K562 (cell line): ENCODE measurements at regions of chr6 and their contacts with region 1.

Region 1: DNA sequence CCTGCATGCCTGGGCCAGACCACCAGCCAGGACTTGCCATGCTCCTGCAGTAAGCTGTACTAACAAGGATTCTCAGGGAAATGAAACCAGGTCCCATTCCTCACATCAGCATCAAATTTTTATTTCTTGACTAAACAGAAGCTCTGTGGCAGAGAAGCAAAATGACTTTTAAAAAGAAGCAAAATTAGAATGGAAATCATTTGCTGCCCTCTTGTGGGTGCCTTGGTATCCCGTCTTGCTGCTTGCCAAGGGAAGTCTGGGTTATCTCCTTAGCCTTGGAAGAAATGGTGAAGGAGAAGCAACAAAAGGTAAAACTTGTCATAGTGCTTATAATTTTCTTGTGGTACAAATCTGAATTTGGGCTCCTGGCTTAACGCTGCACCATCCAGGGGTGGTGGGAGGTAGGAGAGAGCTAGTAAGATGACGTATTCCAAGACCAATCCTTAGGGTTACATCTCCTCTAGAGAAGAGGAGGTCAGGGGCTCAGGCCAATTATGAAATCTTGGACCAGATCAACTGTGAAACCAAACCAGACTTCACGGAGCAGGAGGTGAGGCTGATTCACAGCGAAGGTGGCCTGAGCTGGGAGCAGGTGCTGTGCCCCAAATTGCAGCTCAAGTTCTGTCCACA is 107.5 kb downstream of the FAXC start:
- DNase-seq: peak; percentile 13 to 41 (median 15)
- ATAC-seq: peak; percentile 59; the same call in 2 of the 3 replicates
- H3K4me3 ChIP-seq: no peak overlapping the region
- H3K27ac ChIP-seq: no peak overlapping the region
- H3K4me1 ChIP-seq: no peaks in the 10 kb centered on the region
- H3K27me3 ChIP-seq: no peaks in the 10 kb centered on the region
- CTCF ChIP-seq: peak; percentile 37 to 56 (median 43); a peak in 3 of 6 replicates
- EP300 ChIP-seq: no peak
- POLR2A ChIP-seq: no peak
- RAD21 ChIP-seq: peak in 1 of 2 experiments; percentile 52; a peak in 3 of 4 replicates

Region 2: DNA sequence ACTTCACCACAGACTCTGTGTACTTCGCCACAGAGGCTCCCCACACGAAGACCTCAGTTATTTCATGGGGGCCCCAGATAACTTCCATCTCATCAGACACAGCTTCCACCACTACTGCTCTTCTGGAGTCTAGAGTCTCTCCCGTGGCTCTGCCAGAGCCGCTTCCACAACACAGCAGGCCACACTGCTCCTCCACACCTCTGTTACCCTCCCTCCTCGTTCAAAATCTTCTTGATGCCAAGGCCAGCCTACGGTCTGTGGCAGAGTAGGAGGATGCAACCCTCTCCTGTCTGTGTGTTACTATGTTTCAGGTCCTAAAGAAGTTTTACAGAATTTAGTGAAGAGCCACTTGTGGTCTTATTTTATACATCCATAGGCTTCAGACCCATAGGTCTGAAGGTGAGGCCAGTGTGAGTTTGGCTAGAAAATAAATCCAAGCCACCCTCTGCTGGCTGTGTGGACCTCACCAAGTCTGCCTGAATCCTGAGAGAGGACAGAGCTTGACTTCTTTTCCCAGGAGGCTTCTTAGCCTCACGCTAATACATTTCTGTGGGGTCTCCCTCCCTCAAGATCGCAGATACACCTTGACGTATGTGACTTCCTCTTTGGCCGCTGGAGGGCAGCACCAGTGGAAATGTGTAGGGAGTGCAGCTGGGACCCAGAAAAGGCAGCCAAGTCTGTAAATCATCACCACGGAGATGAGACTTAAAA is 90.2 kb before region 1 on chr6:
- CTCF ChIA-PET with region 1: interaction called, 5 read pairs
- POLR2A ChIA-PET with region 1: no interaction called
- in situ Hi-C with region 1: no loop called
- intact Hi-C with region 1: loop called (anchors 5 kb)
- DNase-seq: peak; percentile 35 to 63 (median 50)
- ATAC-seq: peak; percentile 99
- H3K4me3 ChIP-seq: no peak overlapping the region
- H3K27ac ChIP-seq: no peak overlapping the region
- H3K4me1 ChIP-seq: no peaks in the 10 kb centered on the region
- H3K27me3 ChIP-seq: no peaks in the 10 kb centered on the region
- CTCF ChIP-seq: peak; percentile 45 to 80 (median 70)
- EP300 ChIP-seq: no peak
- POLR2A ChIP-seq: no peak
- RAD21 ChIP-seq: peak; percentile 35 to 51; a peak in 3 of 4 replicates